ENCODE measurements at regions of chr6 and their contacts with region 1.

Region 1: GRCh38 chr6:43916924-43917877 is 147.2 kb downstream of the VEGFA start:
- DNase-seq: peak; percentile 92
- ATAC-seq: peak; percentile 78
- H3K4me3 ChIP-seq: peak overlapping the region in 2 of 3 experiments; percentile 5 to 47; a peak in 2 of 6 replicates
- H3K27ac ChIP-seq: peak overlapping the region; percentile 85
- H3K4me1 ChIP-seq: peaks cover 97% of the 10 kb centered on the region
- H3K27me3 ChIP-seq: no peaks in the 10 kb centered on the region
- CTCF ChIP-seq: 0 out of 2 replicates have a peak, but pooled peaks have one; percentile 24
- EP300 ChIP-seq: peak in 1 of 2 experiments; percentile 91; a peak in 2 of 4 replicates
- POLR2A ChIP-seq: no peak; a peak in 1 of 4 replicates
- RAD21 ChIP-seq: 0 out of 2 replicates have a peak, but pooled peaks have one; percentile 10

Region 2: GRCh38 chr6:43900911-43901732 is 16.1 kb before region 1 on chr6:
- CTCF ChIA-PET with region 1: no interaction called
- POLR2A ChIA-PET with region 1: interaction called, 26 read pairs
- in situ Hi-C with region 1: no loop called
- intact Hi-C with region 1: no loop called
- DNase-seq: peak; percentile 57
- ATAC-seq: peak; percentile 82
- H3K4me3 ChIP-seq: peak overlapping the region in 2 of 3 experiments; percentile 29 to 55; a peak in 4 of 6 replicates
- H3K27ac ChIP-seq: peak overlapping the region; percentile 54
- H3K4me1 ChIP-seq: peaks cover 67% of the 10 kb centered on the region
- H3K27me3 ChIP-seq: no peaks in the 10 kb centered on the region
- CTCF ChIP-seq: no peak
- EP300 ChIP-seq: peak in 1 of 2 experiments; percentile 67; a peak in 1 of 4 replicates
- POLR2A ChIP-seq: no peak
- RAD21 ChIP-seq: no peak